ENCODE measurements at regions of chr15 and their contacts with region 1.

Region 1: DNA sequence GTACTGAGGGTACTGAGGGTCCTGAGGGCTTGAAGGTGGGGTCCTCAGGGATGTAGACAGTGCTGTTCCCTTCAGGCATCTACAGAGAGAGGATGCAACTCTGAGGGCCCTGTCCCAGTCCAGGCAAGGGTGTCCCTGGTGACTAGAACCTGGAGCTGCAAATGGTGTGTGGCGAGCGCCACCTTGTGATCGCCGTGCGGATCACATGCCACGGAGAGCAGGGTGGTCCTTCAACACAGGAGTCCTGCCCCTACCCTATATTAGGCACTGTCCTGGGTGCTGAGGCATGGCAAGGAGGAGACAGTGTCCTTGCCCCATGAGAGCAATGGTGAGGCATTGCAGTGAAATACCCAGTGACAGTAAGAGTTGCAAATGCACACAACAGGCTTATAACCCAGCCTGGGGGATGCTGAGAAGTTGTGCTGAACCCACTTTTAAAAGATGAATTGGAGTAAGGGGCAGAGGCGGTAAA is 23.6 kb downstream of the RHCG start:
- DNase-seq: peak; percentile 62
- ATAC-seq: peak; percentile 86
- H3K4me3 Mint-ChIP-seq: no peak overlapping the region
- H3K27ac Mint-ChIP-seq: no peak overlapping the region
- H3K4me1 Mint-ChIP-seq: no peaks in the 10 kb centered on the region
- H3K27me3 Mint-ChIP-seq: peaks cover 30% of the 10 kb centered on the region
- CTCF ChIP-seq: no peak

Region 2: DNA sequence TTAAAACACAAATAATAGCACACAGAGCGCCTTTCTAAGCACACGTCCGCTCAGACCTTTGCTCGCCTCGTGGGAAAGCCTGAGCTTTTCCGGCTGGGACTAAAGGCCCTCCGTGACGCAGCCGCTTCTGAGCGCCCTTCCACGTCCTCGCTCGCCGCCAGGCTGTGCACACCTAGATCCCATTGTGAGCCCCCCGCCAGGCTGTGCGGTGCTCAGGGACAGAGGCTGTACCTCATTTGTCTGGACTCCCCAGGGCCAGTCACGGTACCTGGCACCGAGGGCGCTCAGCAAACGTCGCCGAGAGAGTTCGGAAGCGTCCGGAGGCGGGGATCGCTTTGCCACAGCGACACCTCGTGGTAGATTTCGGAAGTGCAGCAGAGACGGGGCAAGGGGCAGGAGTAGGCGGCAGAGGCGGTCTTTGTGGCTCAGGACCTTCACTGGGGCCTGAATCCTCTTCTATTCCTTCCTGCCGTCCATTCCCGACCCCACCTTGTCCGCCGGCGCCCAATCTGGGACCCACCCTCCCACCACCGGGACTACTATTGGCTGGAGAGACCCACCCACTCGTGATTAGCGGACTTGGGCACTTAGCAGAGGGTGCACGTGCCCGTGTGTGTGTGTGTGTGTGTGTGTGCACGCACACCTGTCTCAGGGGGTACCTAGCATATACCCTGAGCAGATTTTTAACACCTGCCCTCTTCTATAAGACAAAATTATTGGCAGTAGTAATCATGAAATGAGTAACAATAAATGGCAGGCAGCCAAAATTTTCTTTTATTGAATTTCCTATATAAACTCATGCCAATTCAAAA is 42.1 kb before region 1 on chr15:
- CTCF ChIA-PET with region 1: interaction called, 4 read pairs
- POLR2A ChIA-PET with region 1: no interaction called
- intact Hi-C with region 1: loop called (anchors 1 kb)
- DNase-seq: peak; percentile 94
- ATAC-seq: peak; percentile 99
- H3K4me3 Mint-ChIP-seq: peak overlapping the region; percentile 85
- H3K27ac Mint-ChIP-seq: peak overlapping the region; percentile 38
- H3K4me1 Mint-ChIP-seq: peaks cover 4% of the 10 kb centered on the region
- H3K27me3 Mint-ChIP-seq: peaks cover 10% of the 10 kb centered on the region
- CTCF ChIP-seq: peak; percentile 81

Region 3: DNA sequence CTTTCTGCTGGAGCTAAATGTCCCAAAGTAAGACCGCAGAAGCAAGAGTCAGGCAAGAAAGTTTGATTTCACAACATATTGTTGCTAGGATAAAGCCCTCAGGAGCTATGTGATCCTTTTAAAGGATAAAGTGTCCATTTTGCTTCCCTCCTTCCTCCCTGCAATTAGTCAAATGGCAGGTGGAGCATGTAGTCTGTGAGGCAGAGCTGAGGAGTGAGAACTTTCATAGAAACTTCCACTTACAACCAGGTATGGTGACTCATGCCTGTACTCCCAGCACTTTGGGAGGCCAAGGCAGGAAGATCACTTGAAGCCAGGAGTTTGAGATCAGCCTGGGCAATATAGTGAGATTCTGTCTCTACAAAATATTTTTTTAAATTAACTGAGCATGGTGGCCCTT is 48.8 kb after region 1 on chr15:
- CTCF ChIA-PET with region 1: no interaction called
- POLR2A ChIA-PET with region 1: no interaction called
- intact Hi-C with region 1: no loop called
- DNase-seq: no peak
- ATAC-seq: no peak
- H3K4me3 Mint-ChIP-seq: no peak overlapping the region
- H3K27ac Mint-ChIP-seq: no peak overlapping the region
- H3K4me1 Mint-ChIP-seq: peaks cover 4% of the 10 kb centered on the region
- H3K27me3 Mint-ChIP-seq: peaks cover 6% of the 10 kb centered on the region
- CTCF ChIP-seq: no peak

Measured in activated B cell treated with CpG ODN at 0.5 μM for 24 hours (primary cell).